Dendritic cell treated with granulocyte-macrophage colony-stimulating factor and Interleukin-4, amounts not matched to agents 40 ng/mL and 50 ng/mL, for 4 days (primary cell): ENCODE measurements at regions of chr2 and their contacts with region 1.

Region 1: DNA sequence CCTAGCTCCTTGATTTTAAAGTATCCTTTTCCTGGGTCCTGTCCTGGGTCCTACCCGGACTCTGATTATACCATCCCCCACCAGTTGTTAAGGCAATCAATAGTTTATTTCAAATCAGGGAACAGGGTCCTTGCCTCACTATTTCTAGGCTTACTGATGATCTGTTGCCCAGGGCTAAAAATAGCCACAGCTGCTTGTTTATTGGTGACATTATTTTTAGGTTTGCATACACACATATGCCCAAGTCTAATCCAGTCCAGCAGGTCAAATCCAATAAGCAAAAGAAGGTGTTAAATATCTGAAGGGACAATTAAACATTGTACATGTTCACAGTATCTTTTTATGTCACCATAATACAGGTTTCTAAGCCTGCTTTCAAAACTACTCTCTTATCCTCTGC is 66.0 kb downstream of the RAB10 start:
- H3K4me3 Mint-ChIP-seq: no peak overlapping the region
- H3K27ac Mint-ChIP-seq: no peak overlapping the region
- H3K4me1 Mint-ChIP-seq: peaks cover 41% of the 10 kb centered on the region
- H3K27me3 Mint-ChIP-seq: no peaks in the 10 kb centered on the region

Region 2: GRCh38 chr2:26043862-26044696 is 55.9 kb before region 1 on chr2:
- intact Hi-C with region 1: loop called (anchors 10 kb)
- H3K4me3 Mint-ChIP-seq: peak overlapping the region; percentile 45
- H3K27ac Mint-ChIP-seq: peak overlapping the region; percentile 26
- H3K4me1 Mint-ChIP-seq: peaks cover 74% of the 10 kb centered on the region
- H3K27me3 Mint-ChIP-seq: no peaks in the 10 kb centered on the region